Caco-2 (cell line): ENCODE measurements at regions of chr7 and their contacts with region 1.

Region 1: GRCh38 chr7:74183613-74184450 is 9.7 kb downstream of the EIF4H start:
- DNase-seq: peak in 1 of 2 experiments; percentile 59
- H3K4me3 ChIP-seq: no peak overlapping the region
- H3K4me3 Mint-ChIP-seq: no peak overlapping the region
- H3K27ac Mint-ChIP-seq: no peak overlapping the region
- H3K4me1 ChIP-seq: peaks cover 20% of the 10 kb centered on the region
- H3K4me1 Mint-ChIP-seq: peaks cover 39% of the 10 kb centered on the region
- H3K27me3 ChIP-seq: no peaks in the 10 kb centered on the region
- H3K27me3 Mint-ChIP-seq: no peaks in the 10 kb centered on the region
- CTCF ChIP-seq: peak; percentile 34 to 55

Region 2: DNA sequence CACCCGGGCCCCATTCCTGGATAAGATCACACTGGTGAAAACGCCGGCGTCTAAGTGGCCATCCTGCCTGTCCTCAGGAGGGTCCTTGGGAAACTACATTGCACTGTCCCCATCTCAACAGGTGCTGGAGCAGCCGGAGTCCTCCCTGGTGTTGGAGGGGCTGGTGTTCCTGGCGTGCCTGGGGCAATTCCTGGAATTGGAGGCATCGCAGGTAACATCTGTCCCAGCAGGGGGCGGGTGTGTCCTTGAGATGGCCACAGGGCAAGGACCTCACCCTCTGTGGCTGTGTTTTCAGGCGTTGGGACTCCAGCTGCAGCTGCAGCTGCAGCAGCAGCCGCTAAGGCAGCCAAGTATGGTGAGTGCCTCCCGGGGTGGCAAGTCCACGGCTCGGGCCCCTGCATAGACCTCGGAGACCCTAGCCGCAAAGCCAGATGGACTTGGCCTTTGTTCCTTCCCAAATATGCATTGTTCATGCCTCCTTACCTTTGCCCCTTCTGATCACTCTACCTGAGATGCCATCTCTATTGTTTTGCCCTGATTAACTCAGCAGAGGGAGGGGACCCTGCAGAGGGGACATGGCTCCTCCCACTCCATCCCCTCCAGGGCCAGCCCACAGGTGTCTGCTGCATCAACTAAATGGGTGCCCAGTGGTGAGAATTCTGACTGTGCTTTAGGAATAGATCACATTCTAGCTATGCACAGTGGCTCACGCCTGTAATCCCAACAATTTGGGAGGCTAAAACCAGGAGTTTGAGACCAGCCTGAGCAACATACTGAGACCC is 132.0 kb before region 1 on chr7:
- CTCF ChIA-PET with region 1: interaction called, 6 read pairs
- POLR2A ChIA-PET with region 1: no interaction called
- intact Hi-C with region 1: loop called (anchors 5 kb)
- DNase-seq: peak; percentile 80 to 84
- H3K4me3 ChIP-seq: no peak overlapping the region
- H3K4me3 Mint-ChIP-seq: no peak overlapping the region
- H3K27ac Mint-ChIP-seq: no peak overlapping the region
- H3K4me1 ChIP-seq: no peaks in the 10 kb centered on the region
- H3K4me1 Mint-ChIP-seq: no peaks in the 10 kb centered on the region
- H3K27me3 ChIP-seq: no peaks in the 10 kb centered on the region
- H3K27me3 Mint-ChIP-seq: peaks cover 17% of the 10 kb centered on the region
- CTCF ChIP-seq: peak; percentile 76 to 78

Region 3: GRCh38 chr7:74068393-74069085 is 115.3 kb before region 1 on chr7:
- CTCF ChIA-PET with region 1: interaction called, 8 read pairs
- POLR2A ChIA-PET with region 1: no interaction called
- intact Hi-C with region 1: loop called (anchors 5 kb)
- DNase-seq: no peak
- H3K4me3 ChIP-seq: no peak overlapping the region
- H3K4me3 Mint-ChIP-seq: no peak overlapping the region
- H3K27ac Mint-ChIP-seq: no peak overlapping the region
- H3K4me1 ChIP-seq: no peaks in the 10 kb centered on the region
- H3K4me1 Mint-ChIP-seq: no peaks in the 10 kb centered on the region
- H3K27me3 ChIP-seq: no peaks in the 10 kb centered on the region
- H3K27me3 Mint-ChIP-seq: no peaks in the 10 kb centered on the region
- CTCF ChIP-seq: no peak

Region 4: DNA sequence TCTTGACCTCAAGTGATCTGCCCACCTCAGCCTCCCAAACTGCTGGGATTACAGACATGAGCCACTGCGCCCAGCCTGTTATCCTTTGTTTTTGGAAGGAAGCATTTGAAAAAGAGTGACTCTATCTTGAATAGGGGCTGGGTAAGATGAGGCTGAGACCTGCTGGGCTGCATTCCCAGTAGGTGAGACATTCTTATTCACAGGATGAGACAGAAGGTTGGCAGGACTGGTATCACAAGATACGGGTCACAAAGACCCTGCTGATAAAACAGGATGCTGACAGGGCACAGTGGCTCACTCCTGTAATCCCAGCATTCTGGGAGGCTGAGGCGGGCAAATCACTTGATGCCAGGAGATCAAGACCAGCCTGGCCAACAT is 50.2 kb before region 1 on chr7:
- CTCF ChIA-PET with region 1: interaction called, 10 read pairs
- POLR2A ChIA-PET with region 1: interaction called, 7 read pairs
- intact Hi-C with region 1: no loop called
- DNase-seq: no peak
- H3K4me3 ChIP-seq: no peak overlapping the region
- H3K4me3 Mint-ChIP-seq: no peak overlapping the region
- H3K27ac Mint-ChIP-seq: no peak overlapping the region
- H3K4me1 ChIP-seq: peaks cover 5% of the 10 kb centered on the region; the same call in 1 of the 2 replicates
- H3K4me1 Mint-ChIP-seq: no peaks in the 10 kb centered on the region
- H3K27me3 ChIP-seq: no peaks in the 10 kb centered on the region
- H3K27me3 Mint-ChIP-seq: no peaks in the 10 kb centered on the region
- CTCF ChIP-seq: no peak

Region 5: DNA sequence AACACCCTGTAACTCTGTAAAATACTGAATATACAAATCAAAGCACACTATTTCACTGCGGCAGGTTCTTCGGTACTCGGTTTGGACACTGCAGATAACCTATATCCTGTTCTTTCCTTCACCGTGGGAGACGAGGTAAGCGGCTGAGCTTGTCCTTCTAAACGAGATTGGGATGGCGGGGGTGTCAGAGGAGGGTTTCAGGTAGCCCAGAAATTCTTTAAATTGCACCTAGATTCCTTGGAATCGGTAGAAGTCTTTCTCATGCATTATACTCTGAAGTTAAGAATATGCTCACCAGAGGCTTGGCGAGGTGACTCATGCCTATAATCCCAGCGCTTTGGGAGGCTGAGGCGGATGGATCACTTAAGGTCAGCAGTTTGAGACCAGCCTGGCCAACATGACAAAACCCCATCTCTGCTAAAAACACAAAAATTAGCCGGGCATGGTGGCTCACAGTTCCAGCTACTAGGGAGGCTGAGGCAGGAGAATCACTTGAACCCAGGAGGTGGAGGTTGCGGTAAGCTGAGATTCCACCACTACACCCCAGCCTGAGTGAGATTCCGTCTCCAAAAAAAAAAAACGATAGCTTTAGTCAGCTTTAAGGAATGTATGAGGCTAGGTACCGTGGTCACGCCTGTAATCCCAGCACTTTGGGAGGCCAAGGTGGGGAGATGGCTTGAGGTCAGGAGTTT is 15.9 kb after region 1 on chr7:
- CTCF ChIA-PET with region 1: no interaction called
- POLR2A ChIA-PET with region 1: no interaction called
- intact Hi-C with region 1: no loop called
- DNase-seq: no peak
- H3K4me3 ChIP-seq: no peak overlapping the region
- H3K4me3 Mint-ChIP-seq: no peak overlapping the region
- H3K27ac Mint-ChIP-seq: no peak overlapping the region
- H3K4me1 ChIP-seq: no peaks in the 10 kb centered on the region
- H3K4me1 Mint-ChIP-seq: no peaks in the 10 kb centered on the region
- H3K27me3 ChIP-seq: no peaks in the 10 kb centered on the region
- H3K27me3 Mint-ChIP-seq: peaks cover 4% of the 10 kb centered on the region
- CTCF ChIP-seq: no peak